Activated CD8-positive, alpha-beta T cell treated with anti-CD3 and anti-CD28 coated beads for 36 hours (primary cell): ENCODE measurements at regions of chr6 and their contacts with region 1.

Region 1: DNA sequence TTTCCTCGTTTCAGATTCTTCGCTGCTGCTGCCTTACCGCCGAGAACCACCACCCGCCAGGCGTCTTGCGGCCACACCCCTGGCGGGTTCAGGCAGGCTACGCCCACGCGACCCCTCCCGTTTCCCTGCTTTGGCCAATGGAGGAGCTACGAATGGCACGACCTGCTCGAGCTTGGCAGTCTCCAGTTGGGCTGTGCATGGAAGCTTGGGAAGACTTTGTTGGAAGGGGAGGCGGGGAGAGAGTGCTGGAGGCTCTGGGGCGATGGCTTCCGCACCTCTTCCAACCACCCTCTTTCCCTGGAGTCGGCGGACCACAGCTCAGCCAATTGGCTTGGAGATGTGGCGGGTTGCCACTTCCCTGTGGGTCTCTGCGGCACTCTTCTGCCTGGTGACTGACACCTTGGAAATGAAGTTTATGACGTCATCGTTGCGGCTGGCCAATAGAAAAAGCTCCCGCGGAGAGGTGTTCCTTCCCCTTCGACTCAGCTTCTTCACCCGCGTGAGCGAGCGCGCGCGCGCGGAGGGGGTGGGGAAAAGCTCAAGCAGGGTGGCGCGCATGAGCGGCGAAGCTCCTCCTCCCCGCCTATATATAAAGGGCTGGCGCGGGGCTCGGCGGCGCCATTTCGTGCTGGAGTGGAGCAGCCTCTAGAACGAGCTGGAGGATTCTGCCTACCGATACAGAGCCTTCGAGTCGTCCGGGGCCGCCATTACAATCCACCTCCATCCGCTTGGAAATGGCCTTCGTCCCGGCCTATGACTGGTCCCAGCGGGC is 3.4 kb downstream of the BRD2 start:
- DNase-seq: peak; percentile 100
- ATAC-seq: peak; percentile 38
- H3K4me3 Mint-ChIP-seq: peak overlapping the region; percentile 95
- H3K27ac Mint-ChIP-seq: peak overlapping the region; percentile 99
- H3K4me1 Mint-ChIP-seq: peaks cover 23% of the 10 kb centered on the region
- H3K27me3 Mint-ChIP-seq: no peaks in the 10 kb centered on the region
- CTCF ChIP-seq: no peak

Region 2: GRCh38 chr6:32819729-32820128 is 152.0 kb before region 1 on chr6:
- CTCF ChIA-PET with region 1: no interaction called
- POLR2A ChIA-PET with region 1: no interaction called
- intact Hi-C with region 1: no loop called
- DNase-seq: no peak
- ATAC-seq: peak; percentile 17
- H3K4me3 Mint-ChIP-seq: no peak overlapping the region
- H3K27ac Mint-ChIP-seq: no peak overlapping the region
- H3K4me1 Mint-ChIP-seq: peaks cover 14% of the 10 kb centered on the region
- H3K27me3 Mint-ChIP-seq: no peaks in the 10 kb centered on the region
- CTCF ChIP-seq: no peak

Region 3: GRCh38 chr6:32843979-32844838 is 127.6 kb before region 1 on chr6 and contains the start of gene PSMB8:
- CTCF ChIA-PET with region 1: interaction called, 28 read pairs
- POLR2A ChIA-PET with region 1: interaction called, 156 read pairs
- intact Hi-C with region 1: loop called (anchors 2 kb)
- DNase-seq: peak; percentile 100
- ATAC-seq: peak; percentile 75
- H3K4me3 Mint-ChIP-seq: peak within 1 kb of the TSS; percentile 97
- H3K27ac Mint-ChIP-seq: peak within 1 kb of the TSS; percentile 99
- H3K4me1 Mint-ChIP-seq: peaks cover 63% of the 10 kb centered on the region
- H3K27me3 Mint-ChIP-seq: no peaks in the 10 kb centered on the region
- CTCF ChIP-seq: no peak
- total RNA-seq, gene PSMB8: 370 to 371 TPM

Region 4: DNA sequence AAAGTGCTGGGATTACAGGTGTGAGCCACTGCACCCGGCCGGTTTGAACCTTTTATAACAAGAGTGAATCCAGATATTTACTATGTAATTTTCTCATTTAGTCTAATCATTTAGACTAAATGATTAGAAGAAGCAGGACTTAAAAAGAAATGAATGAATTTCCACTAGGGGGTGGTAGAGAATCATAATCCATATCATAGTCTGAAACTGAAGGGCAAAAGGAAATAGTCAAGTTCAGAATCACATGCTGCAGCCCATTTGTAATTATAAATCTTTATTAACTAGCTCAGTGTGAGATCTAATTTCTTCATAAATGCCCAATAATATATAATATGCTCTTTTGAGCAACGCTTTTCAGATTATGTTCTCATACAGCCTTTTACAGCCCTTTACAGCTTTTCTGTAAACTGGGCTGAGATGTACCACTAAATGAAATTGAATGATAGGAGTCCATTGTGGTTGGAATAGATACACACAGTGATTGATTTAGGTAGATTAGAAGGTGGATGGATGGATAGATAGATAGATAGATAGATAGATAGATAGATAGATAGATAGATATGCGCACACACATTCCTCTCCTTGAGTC is 86.0 kb before region 1 on chr6:
- CTCF ChIA-PET with region 1: interaction called, 8 read pairs
- POLR2A ChIA-PET with region 1: interaction called, 13 read pairs
- intact Hi-C with region 1: no loop called
- DNase-seq: no peak
- ATAC-seq: peak; percentile 70
- H3K4me3 Mint-ChIP-seq: no peak overlapping the region
- H3K27ac Mint-ChIP-seq: no peak overlapping the region
- H3K4me1 Mint-ChIP-seq: peaks cover 6% of the 10 kb centered on the region
- H3K27me3 Mint-ChIP-seq: no peaks in the 10 kb centered on the region
- CTCF ChIP-seq: peak; percentile 74

Region 5: DNA sequence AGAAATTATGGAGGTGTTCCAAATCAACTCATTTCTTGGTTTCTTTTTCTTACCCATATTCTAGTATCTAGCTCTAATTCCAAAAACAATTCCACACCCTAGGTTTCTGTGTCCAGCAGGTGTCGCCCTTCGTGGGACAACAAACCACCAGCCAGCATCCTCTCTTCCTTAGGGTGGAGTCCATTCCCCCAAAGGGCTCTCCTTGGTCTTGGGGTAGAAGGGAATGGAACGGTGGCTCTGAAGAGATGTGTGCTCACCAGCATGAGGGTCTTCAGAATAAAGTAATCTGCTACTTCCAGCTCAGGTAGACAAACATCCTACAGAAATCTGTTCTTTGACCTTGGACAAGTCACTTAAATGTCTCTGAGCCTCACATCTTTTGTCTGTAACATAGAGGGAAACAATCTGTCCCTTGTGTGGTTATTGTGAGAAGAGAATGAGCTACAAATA is 38.1 kb before region 1 on chr6:
- CTCF ChIA-PET with region 1: interaction called, 364 read pairs
- POLR2A ChIA-PET with region 1: interaction called, 392 read pairs
- intact Hi-C with region 1: no loop called
- DNase-seq: peak; percentile 87
- ATAC-seq: peak; percentile 70
- H3K4me3 Mint-ChIP-seq: no peak overlapping the region
- H3K27ac Mint-ChIP-seq: no peak overlapping the region
- H3K4me1 Mint-ChIP-seq: peaks cover 14% of the 10 kb centered on the region
- H3K27me3 Mint-ChIP-seq: no peaks in the 10 kb centered on the region
- CTCF ChIP-seq: peak; percentile 81

Region 6: GRCh38 chr6:32952817-32953739 is 18.7 kb before region 1 on chr6 and contains the start of gene HLA-DMA:
- CTCF ChIA-PET with region 1: interaction called, 246 read pairs
- POLR2A ChIA-PET with region 1: interaction called, 852 read pairs
- intact Hi-C with region 1: no loop called
- DNase-seq: peak; percentile 83
- ATAC-seq: peak; percentile 96
- H3K4me3 Mint-ChIP-seq: peak within 1 kb of the TSS; percentile 76
- H3K27ac Mint-ChIP-seq: peak within 1 kb of the TSS; percentile 77
- H3K4me1 Mint-ChIP-seq: peaks cover 65% of the 10 kb centered on the region
- H3K27me3 Mint-ChIP-seq: no peaks in the 10 kb centered on the region
- CTCF ChIP-seq: peak; percentile 98
- total RNA-seq, gene HLA-DMA: 16.2 TPM

Region 7: DNA sequence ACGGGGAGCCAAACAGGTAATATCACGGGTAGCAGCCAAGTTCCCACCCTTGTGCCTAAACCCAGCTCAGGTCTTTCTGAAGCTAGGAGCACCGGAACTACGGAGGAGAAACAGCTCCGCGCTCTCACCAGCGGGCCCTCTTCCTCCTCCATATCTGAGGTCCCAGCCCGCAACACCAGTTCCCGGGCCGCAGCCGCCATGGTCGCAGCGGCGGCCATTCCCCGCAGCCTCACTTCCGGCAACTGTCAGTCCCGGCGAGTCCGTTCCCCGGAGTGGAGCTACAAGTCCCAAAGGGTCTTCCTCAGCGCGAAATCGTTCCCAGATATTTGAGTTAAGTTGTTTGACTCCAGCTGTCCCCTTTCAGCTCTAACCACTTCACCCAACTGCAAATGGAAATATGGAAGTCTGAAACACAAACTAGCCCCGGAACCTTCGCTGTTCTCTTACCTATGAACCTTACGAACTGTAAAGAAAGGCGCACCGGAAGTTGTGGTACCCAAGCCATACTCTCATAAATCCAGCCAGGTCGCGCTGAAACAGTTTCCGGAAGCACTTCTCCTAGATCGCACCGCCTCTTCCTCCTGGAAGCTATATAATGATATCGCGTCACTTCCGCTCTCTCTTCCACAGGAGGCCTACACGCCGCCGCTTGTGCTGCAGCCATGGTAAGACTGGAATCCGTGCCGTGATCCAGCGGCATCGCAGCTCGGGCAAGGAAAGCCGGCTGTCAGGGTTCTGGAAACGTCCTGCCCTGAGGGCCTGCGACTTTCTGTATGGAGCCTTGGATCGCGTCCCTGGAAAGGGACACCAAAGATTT is 299.9 kb after region 1 on chr6 and contains the starts of genes RPS18 and VPS52:
- CTCF ChIA-PET with region 1: interaction called, 4 read pairs
- POLR2A ChIA-PET with region 1: interaction called, 26 read pairs
- intact Hi-C with region 1: no loop called
- DNase-seq: peak; percentile 96
- ATAC-seq: peak; percentile 85
- H3K4me3 Mint-ChIP-seq: peak within 1 kb of the TSS; percentile 95
- H3K27ac Mint-ChIP-seq: peak within 1 kb of the TSS; percentile 100
- H3K4me1 Mint-ChIP-seq: peaks cover 36% of the 10 kb centered on the region
- H3K27me3 Mint-ChIP-seq: no peaks in the 10 kb centered on the region
- CTCF ChIP-seq: no peak
- total RNA-seq, gene RPS18: 4,910 to 4,938 TPM
- total RNA-seq, gene VPS52: 31.2 to 34.3 TPM